HEK293 (cell line): ENCODE measurements at regions of chr6 and their contacts with region 1.

Region 1: GRCh38 chr6:41424370-41425058 is 89.1 kb downstream of the NCR2 start:
- H3K4me3 ChIP-seq: no peak overlapping the region
- H3K27ac ChIP-seq: no peak overlapping the region
- H3K4me1 ChIP-seq: peaks cover 5% of the 10 kb centered on the region; the same call in 1 of the 2 replicates
- CTCF ChIP-seq: peak; percentile 51

Region 2: DNA sequence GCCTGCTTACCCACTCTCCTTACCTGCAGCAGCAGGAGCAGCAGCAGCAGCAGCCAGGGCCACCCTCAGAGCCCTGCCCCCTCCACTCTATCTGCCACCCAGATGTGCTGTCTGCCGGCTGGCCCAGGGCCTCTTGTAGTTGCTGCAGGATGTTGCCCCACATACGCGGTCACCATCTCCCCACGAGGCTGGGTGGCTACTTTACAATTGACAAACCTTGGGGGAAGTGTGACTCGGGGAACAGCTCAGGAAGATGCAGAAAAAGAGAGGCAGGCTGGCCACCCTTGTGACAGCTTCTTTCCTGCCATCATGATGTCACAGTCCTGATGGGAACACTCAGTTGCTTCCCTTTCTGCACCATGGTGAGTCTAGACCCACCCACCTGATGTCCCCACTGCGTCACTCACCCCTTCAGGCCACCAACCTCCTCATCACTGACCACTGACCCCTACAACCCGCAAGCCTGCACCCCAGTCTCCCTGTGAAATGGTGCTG is 152.6 kb before region 1 on chr6:
- CTCF ChIA-PET with region 1: no interaction called
- POLR2A ChIA-PET with region 1: no interaction called
- H3K4me3 ChIP-seq: no peak overlapping the region
- H3K27ac ChIP-seq: no peak overlapping the region
- H3K4me1 ChIP-seq: no peaks in the 10 kb centered on the region
- CTCF ChIP-seq: no peak

Region 3: GRCh38 chr6:41437604-41438003 is 13.1 kb after region 1 on chr6:
- CTCF ChIA-PET with region 1: interaction called, 86 read pairs
- POLR2A ChIA-PET with region 1: no interaction called
- H3K4me3 ChIP-seq: no peak overlapping the region
- H3K27ac ChIP-seq: no peak overlapping the region
- H3K4me1 ChIP-seq: peaks cover 2% of the 10 kb centered on the region; the same call in 1 of the 2 replicates
- CTCF ChIP-seq: no peak

Region 4: DNA sequence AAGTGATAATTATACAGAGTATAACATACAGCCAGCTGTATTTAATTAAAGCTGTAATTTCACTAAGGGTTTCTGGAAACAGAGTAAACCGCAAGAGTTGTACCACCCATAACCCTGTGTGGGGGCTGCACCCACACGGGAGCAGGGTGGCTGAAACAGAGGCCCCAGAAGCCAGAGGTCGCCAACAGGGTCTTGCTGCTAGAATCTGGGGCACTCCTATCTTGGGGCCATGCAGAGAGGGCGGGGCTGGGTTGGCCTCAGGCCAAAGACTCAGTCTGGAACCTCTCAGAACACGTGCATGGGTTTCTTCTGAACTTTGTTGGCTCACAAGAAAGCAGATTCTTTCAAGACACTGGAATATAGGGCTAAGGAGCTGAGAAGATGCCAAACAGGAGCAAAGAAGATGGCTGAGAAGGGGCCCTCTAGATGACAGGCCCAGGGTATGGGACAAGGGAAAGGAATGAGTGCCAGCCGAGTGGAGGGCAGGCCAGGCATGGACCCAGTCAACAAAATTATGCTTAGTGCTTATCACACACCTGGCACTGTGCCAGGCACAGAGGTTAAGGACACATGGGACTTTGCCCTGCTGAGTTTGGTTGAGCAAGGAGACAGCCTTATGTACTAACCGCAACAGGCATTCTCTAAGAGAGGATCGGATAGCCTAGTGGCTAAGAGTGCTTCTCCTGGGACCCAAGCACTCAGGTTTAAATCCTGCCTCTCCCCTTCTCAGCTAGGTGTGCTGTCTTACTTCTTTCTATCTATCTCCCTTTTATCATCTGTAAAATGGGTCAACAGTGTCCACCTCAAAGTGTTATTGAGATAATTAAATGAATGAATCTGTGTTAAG is 25.1 kb after region 1 on chr6:
- CTCF ChIA-PET with region 1: interaction called, 86 read pairs
- POLR2A ChIA-PET with region 1: interaction called, 3 read pairs
- H3K4me3 ChIP-seq: no peak overlapping the region
- H3K27ac ChIP-seq: peak overlapping the region; percentile 25
- H3K4me1 ChIP-seq: peaks cover 20% of the 10 kb centered on the region
- CTCF ChIP-seq: no peak

Region 5: DNA sequence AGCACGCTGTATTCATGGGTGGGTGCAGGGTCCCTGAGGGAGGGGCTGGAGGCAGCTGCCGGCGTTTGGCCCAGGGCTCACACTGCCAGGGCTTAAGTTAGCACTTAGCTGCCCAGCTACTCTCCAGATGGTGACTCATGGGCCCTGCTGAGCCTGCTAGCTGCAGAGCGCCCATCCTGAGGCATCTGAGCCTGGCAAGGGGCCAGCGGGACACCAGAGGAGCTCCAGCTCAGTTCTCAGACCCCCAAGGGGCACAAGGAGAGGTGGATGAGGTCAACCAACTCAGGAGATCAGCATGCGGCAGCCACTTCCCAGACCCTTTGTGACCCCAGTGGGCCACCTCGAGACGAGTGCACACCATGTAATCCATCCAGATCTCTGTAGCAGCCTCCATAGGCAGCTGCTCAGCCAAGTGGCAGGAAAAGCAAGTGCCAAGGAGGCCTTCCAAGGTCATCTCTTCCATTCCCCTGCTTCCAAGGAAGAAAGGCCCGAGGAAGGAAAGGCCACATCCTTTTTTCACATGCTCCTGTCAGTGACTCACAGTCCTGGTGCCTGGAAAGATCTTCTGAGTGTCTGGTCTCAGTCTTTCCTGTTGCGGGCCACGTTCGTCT is 157.0 kb after region 1 on chr6:
- CTCF ChIA-PET with region 1: interaction called, 14 read pairs
- POLR2A ChIA-PET with region 1: no interaction called
- H3K4me3 ChIP-seq: no peak overlapping the region
- H3K27ac ChIP-seq: no peak overlapping the region
- H3K4me1 ChIP-seq: peaks cover 18% of the 10 kb centered on the region
- CTCF ChIP-seq: no peak